PC-3 (cell line): ENCODE measurements at regions of chr14 and their contacts with region 1.

Region 1: GRCh38 chr14:51651388-51652167 is at the start of gene FRMD6:
- DNase-seq: peak; percentile 86
- ATAC-seq: peak; percentile 71
- H3K4me3 ChIP-seq: peak within 1 kb of the TSS; percentile 86
- H3K27ac ChIP-seq: peak within 1 kb of the TSS; percentile 83
- H3K4me1 ChIP-seq: peaks cover 48% of the 10 kb centered on the region
- H3K27me3 ChIP-seq: no peaks in the 10 kb centered on the region
- CTCF ChIP-seq: peak; percentile 86
- total RNA-seq, gene FRMD6: 88.3 and 103 TPM in 2 replicates

Region 2: GRCh38 chr14:51283402-51284085 is 368.0 kb before region 1 on chr14:
- CTCF ChIA-PET with region 1: interaction called, 30 read pairs
- POLR2A ChIA-PET with region 1: no interaction called
- intact Hi-C with region 1: loop called (anchors 1 kb)
- DNase-seq: peak; percentile 98
- ATAC-seq: peak; percentile 96
- H3K4me3 ChIP-seq: no peak overlapping the region
- H3K27ac ChIP-seq: peak overlapping the region; percentile 2; the same call in 1 of the 2 replicates
- H3K4me1 ChIP-seq: peaks cover 10% of the 10 kb centered on the region
- H3K27me3 ChIP-seq: no peaks in the 10 kb centered on the region
- CTCF ChIP-seq: peak; percentile 99

Region 3: DNA sequence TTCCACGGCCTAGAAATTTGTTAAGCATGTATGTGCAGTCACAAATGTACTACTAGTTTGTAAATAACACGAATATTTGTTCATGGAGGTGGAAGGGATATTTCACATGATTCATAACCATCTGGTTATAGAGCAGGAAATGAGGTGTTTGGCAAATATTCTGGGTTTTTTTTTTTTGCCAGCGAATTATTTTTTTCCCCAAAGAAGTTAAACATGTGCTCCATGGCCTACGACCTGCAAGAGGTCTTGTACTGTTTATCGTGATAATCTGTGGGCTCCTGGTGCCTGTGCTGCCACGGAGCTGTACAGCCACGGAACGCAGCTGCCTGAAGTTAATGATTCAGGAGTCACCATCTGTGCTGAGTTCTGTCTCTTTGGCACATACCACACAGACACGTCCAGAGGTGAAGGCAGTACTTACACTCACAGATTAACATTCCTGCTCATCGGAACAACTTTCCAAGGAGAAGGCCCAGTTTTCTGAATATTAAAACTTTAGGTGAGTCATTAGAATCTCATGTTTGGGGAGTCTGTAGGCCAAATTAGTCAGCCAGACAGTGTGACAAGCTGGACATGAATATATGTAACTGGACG is 255.3 kb before region 1 on chr14:
- CTCF ChIA-PET with region 1: interaction called, 4 read pairs
- POLR2A ChIA-PET with region 1: interaction called, 12 read pairs
- intact Hi-C with region 1: loop called (anchors 1 kb)
- DNase-seq: peak; percentile 99
- ATAC-seq: peak; percentile 48
- H3K4me3 ChIP-seq: peak overlapping the region; percentile 32; the same call in 1 of the 2 replicates
- H3K27ac ChIP-seq: peak overlapping the region; percentile 98
- H3K4me1 ChIP-seq: peaks cover 61% of the 10 kb centered on the region
- H3K27me3 ChIP-seq: no peaks in the 10 kb centered on the region
- CTCF ChIP-seq: no peak

Region 4: DNA sequence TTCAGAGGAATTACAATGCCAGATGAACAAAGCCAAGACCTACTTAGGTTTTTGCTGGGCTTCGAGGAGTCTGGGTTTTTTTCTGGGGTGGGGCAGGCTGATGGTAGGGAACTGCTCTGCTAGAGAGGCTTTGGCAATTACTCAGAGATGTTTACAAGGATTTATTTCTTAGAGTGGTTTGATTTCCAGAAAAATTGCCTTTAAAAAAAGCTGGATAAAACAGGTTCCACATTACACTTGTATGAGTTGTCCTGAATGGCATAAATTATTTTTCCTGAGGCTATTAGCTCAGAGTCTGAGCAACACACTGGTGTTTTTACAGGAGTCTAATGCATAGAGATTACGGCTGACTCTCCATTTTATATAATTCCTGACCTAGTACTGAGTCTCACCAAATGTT is 118.4 kb before region 1 on chr14:
- CTCF ChIA-PET with region 1: interaction called, 15 read pairs
- POLR2A ChIA-PET with region 1: interaction called, 17 read pairs
- intact Hi-C with region 1: loop called (anchors 1 kb)
- DNase-seq: peak; percentile 99
- ATAC-seq: peak; percentile 80
- H3K4me3 ChIP-seq: no peak overlapping the region
- H3K27ac ChIP-seq: peak overlapping the region; percentile 96
- H3K4me1 ChIP-seq: peaks cover 31% of the 10 kb centered on the region
- H3K27me3 ChIP-seq: no peaks in the 10 kb centered on the region
- CTCF ChIP-seq: no peak

Region 5: GRCh38 chr14:51554953-51555352 is 96.6 kb before region 1 on chr14:
- CTCF ChIA-PET with region 1: interaction called, 7 read pairs
- POLR2A ChIA-PET with region 1: interaction called, 4 read pairs
- intact Hi-C with region 1: loop called (anchors 2 kb)
- DNase-seq: peak; percentile 67
- ATAC-seq: peak; percentile 50
- H3K4me3 ChIP-seq: peak overlapping the region; percentile 47
- H3K27ac ChIP-seq: peak overlapping the region; percentile 72
- H3K4me1 ChIP-seq: peaks cover 47% of the 10 kb centered on the region
- H3K27me3 ChIP-seq: no peaks in the 10 kb centered on the region
- CTCF ChIP-seq: peak; percentile 67

Region 6: GRCh38 chr14:51624955-51625569 is 26.5 kb before region 1 on chr14:
- CTCF ChIA-PET with region 1: no interaction called
- POLR2A ChIA-PET with region 1: no interaction called
- intact Hi-C with region 1: no loop called
- DNase-seq: no peak
- ATAC-seq: no peak
- H3K4me3 ChIP-seq: no peak overlapping the region
- H3K27ac ChIP-seq: no peak overlapping the region
- H3K4me1 ChIP-seq: no peaks in the 10 kb centered on the region
- H3K27me3 ChIP-seq: no peaks in the 10 kb centered on the region
- CTCF ChIP-seq: no peak

Region 7: DNA sequence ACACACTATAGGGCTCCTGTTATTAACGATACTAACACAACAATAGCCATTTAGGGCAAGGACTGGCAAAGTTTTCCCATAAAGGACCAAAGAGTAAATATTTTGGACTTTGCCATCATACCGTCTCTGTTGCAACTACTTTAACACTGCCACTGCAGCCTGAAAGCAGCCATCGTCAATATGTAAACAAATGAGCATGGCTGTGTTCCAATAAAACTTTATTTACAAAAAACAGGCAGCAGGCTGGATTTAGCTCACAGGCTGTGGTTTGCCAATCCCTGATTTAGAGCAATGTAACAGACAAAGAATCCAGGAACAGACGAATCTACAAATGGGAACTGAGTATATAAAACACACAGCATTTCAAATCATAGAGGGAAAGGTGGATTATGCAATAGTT is 84.3 kb after region 1 on chr14:
- CTCF ChIA-PET with region 1: no interaction called
- POLR2A ChIA-PET with region 1: interaction called, 14 read pairs
- intact Hi-C with region 1: no loop called
- DNase-seq: peak; percentile 43
- ATAC-seq: no peak
- H3K4me3 ChIP-seq: peak overlapping the region; percentile 6; the same call in 1 of the 2 replicates
- H3K27ac ChIP-seq: no peak overlapping the region
- H3K4me1 ChIP-seq: no peaks in the 10 kb centered on the region; the same call in 1 of the 2 replicates
- H3K27me3 ChIP-seq: no peaks in the 10 kb centered on the region
- CTCF ChIP-seq: no peak